Breast epithelium (tissue), 4 donors: ENCODE measurements at regions of chr2 and their contacts with region 1.

Region 1: GRCh38 chr2:126963390-126963789 is 64.7 kb downstream of the TEX51 start:
- DNase-seq: no peak
- H3K4me3 ChIP-seq: no peak overlapping the region
- H3K27ac ChIP-seq: no peak overlapping the region
- H3K4me1 ChIP-seq: no peaks in the 10 kb centered on the region
- H3K27me3 ChIP-seq: no peaks in the 10 kb centered on the region
- CTCF ChIP-seq: no peak
- POLR2A ChIP-seq: no peak

Region 2: GRCh38 chr2:127623388-127624245 is 660.2 kb after region 1 on chr2:
- intact Hi-C with region 1: no loop called
- DNase-seq: peak in 1 of 2 donors; percentile 45
- H3K4me3 ChIP-seq: no peak overlapping the region
- H3K27ac ChIP-seq: no peak overlapping the region
- H3K4me1 ChIP-seq: no peaks in the 10 kb centered on the region
- H3K27me3 ChIP-seq: no peaks in the 10 kb centered on the region
- CTCF ChIP-seq: no peak
- POLR2A ChIP-seq: no peak

Region 3: GRCh38 chr2:127829845-127830246 is 866.5 kb after region 1 on chr2:
- intact Hi-C with region 1: loop called (anchors 10 kb)
- DNase-seq: no peak
- H3K4me3 ChIP-seq: no peak overlapping the region
- H3K27ac ChIP-seq: no peak overlapping the region
- H3K4me1 ChIP-seq: no peaks in the 10 kb centered on the region
- H3K27me3 ChIP-seq: no peaks in the 10 kb centered on the region
- CTCF ChIP-seq: no peak
- POLR2A ChIP-seq: no peak